HCT116 (cell line): ENCODE measurements at regions of chr20 and their contacts with region 1.

Region 1: GRCh38 chr20:14481863-14482262 is 144.5 kb upstream of the FLRT3 start:
- DNase-seq: no peak
- ATAC-seq: no peak
- H3K4me3 ChIP-seq: no peak overlapping the region
- H3K27ac ChIP-seq: no peak overlapping the region
- H3K4me1 ChIP-seq: no peaks in the 10 kb centered on the region
- H3K27me3 ChIP-seq: no peaks in the 10 kb centered on the region
- CTCF ChIP-seq: no peak
- POLR2A ChIP-seq: no peak
- RAD21 ChIP-seq: no peak

Region 2: GRCh38 chr20:14518648-14519047 is 36.8 kb after region 1 on chr20:
- CTCF ChIA-PET with region 1: no interaction called
- POLR2A ChIA-PET with region 1: no interaction called
- RAD21 ChIA-PET with region 1: no interaction called
- intact Hi-C with region 1: loop called (anchors 5 kb)
- DNase-seq: no peak
- ATAC-seq: no peak
- H3K4me3 ChIP-seq: no peak overlapping the region
- H3K27ac ChIP-seq: no peak overlapping the region
- H3K4me1 ChIP-seq: no peaks in the 10 kb centered on the region
- H3K27me3 ChIP-seq: no peaks in the 10 kb centered on the region
- CTCF ChIP-seq: no peak
- POLR2A ChIP-seq: no peak
- RAD21 ChIP-seq: no peak

Region 3: GRCh38 chr20:14536738-14537137 is 54.9 kb after region 1 on chr20:
- CTCF ChIA-PET with region 1: no interaction called
- POLR2A ChIA-PET with region 1: no interaction called
- RAD21 ChIA-PET with region 1: no interaction called
- intact Hi-C with region 1: no loop called
- DNase-seq: no peak
- ATAC-seq: no peak
- H3K4me3 ChIP-seq: no peak overlapping the region
- H3K27ac ChIP-seq: no peak overlapping the region
- H3K4me1 ChIP-seq: no peaks in the 10 kb centered on the region
- H3K27me3 ChIP-seq: no peaks in the 10 kb centered on the region
- CTCF ChIP-seq: no peak
- POLR2A ChIP-seq: no peak
- RAD21 ChIP-seq: no peak